SK-N-SH (cell line): ENCODE measurements at regions of chr5 and their contacts with region 1.

Region 1: GRCh38 chr5:10695055-10695649 is 65.9 kb downstream of the DAP start:
- DNase-seq: peak; percentile 83
- H3K4me3 ChIP-seq: peak overlapping the region in 1 of 2 experiments; percentile 39; a peak in 1 of 4 replicates
- H3K27ac ChIP-seq: no peak overlapping the region; a peak in 1 of 4 replicates
- H3K4me1 ChIP-seq: peaks cover 33 to 37% of the 10 kb centered on the region in 2 experiments
- H3K27me3 ChIP-seq: no peaks in the 10 kb centered on the region
- CTCF ChIP-seq: peak; percentile 86
- EP300 ChIP-seq: peak in 1 of 2 experiments; percentile 41; a peak in 1 of 4 replicates
- RAD21 ChIP-seq: peak; percentile 92

Region 2: DNA sequence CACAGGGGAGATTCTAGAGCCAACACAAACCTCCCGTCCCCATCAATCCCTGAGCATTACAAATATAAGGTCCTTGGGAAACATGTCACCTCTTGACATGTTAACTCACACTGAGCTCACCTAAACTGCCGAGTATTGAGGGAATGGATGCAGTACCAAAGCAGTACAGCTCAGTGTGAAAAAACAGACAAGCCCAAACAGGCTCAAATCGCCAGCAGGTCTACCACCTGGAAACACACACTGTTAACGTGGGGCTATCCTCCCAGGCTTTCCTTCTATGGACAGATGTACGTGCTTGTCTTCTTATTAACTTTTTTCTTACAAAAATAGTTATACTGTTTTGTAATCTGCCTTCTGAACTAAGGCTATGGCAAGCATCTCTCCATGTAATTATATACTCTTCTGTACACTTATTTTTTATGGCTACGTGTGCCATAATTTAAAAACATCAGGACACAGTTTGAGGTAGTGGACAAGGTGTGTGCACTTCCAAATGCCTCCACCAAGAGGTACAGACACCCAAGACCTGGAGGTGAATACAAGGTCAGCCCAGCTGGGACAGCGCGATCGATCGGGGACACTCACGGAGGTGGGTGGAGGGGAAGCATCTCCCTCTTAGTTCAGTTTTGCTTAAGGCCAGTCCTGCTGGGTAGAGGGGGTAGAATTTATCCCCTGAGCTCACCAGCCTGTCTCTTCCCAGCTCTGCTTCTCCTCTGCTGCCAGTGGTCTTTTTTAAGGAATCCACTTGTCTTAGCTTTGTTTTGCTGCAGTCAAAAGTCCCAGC is 10.7 kb before region 1 on chr5:
- CTCF ChIA-PET with region 1: interaction called, 25 read pairs
- POLR2A ChIA-PET with region 1: no interaction called
- DNase-seq: no peak
- H3K4me3 ChIP-seq: no peak overlapping the region
- H3K27ac ChIP-seq: no peak overlapping the region
- H3K4me1 ChIP-seq: peaks cover 0 to 8% of the 10 kb centered on the region in 2 experiments; a peak in 2 of 4 replicates
- H3K27me3 ChIP-seq: no peaks in the 10 kb centered on the region
- CTCF ChIP-seq: no peak
- EP300 ChIP-seq: no peak
- RAD21 ChIP-seq: no peak

Region 3: DNA sequence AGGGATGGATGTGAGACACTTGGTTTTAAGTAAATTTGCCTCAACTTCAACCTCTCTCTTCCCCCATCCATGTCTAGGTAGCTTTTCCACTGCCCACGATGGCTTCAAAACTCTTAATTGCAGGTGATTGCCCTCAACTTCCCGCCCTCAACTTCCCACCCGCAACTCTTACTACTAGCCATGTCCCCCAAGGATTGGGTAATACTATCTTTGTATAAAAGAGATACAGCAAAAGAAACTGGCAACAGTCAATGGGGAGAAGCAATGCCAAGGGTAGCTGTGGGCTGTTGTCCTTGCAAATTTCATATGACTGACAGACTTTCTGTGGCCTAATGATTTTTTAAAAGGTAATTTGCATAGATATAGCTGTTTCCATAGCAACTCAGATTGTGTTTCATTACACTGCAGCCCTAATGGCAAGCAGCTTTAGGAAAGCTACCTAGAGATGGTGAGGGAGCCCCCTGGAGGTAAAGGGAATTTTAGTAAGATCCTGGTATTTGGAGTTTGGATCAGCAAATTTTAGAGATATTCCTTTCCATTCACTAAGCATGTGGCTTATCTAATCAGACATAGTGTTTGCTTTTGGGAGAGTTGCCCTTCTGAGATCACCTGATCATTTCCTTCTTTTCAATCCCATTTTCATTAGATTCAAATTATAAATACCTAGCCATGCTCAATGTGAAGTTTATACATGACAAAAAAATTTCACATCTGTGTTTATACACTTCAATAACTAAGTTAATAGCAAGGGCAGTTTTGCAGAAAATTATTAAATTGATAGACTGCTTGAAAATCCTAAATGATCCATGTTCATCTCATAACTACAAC is 487.5 kb after region 1 on chr5:
- CTCF ChIA-PET with region 1: interaction called, 12 read pairs
- POLR2A ChIA-PET with region 1: no interaction called
- DNase-seq: peak; percentile 49
- H3K4me3 ChIP-seq: peak overlapping the region in 1 of 2 experiments; percentile 13; a peak in 1 of 4 replicates
- H3K27ac ChIP-seq: no peak overlapping the region
- H3K4me1 ChIP-seq: no peaks in the 10 kb centered on the region
- H3K27me3 ChIP-seq: no peaks in the 10 kb centered on the region; the same call in 1 of the 2 replicates
- CTCF ChIP-seq: peak; percentile 66
- EP300 ChIP-seq: no peak
- RAD21 ChIP-seq: peak; percentile 64